Aorta (tissue), 5 donors: ENCODE measurements at regions of chr5 and their contacts with region 1.

Region 1: GRCh38 chr5:156326718-156327259 is at the start of gene SGCD:
- DNase-seq: peak; percentile 84 to 94
- ATAC-seq: peak; percentile 92
- H3K4me3 ChIP-seq: peak within 1 kb of the TSS; percentile 92 to 98
- H3K27ac ChIP-seq: peak within 1 kb of the TSS; percentile 84 to 94
- H3K4me1 ChIP-seq: peaks cover 2 to 14% of the 10 kb centered on the region in 2 donors
- H3K27me3 ChIP-seq: no peaks in the 10 kb centered on the region
- total RNA-seq, gene SGCD: 31.2 to 129 TPM

Region 2: GRCh38 chr5:156036640-156037039 is 290.1 kb before region 1 on chr5:
- intact Hi-C with region 1: loop called in 1 of 2 experiments (anchors 5 kb)
- DNase-seq: no peak
- ATAC-seq: peak; percentile 84
- H3K4me3 ChIP-seq: no peak overlapping the region
- H3K27ac ChIP-seq: peak overlapping the region in 1 of 2 donors; percentile 96
- H3K4me1 ChIP-seq: peaks cover 0 to 5% of the 10 kb centered on the region in 2 donors
- H3K27me3 ChIP-seq: no peaks in the 10 kb centered on the region

Region 3: GRCh38 chr5:156201788-156202403 is 124.9 kb before region 1 on chr5:
- intact Hi-C with region 1: loop called in 1 of 2 experiments (anchors 10 kb)
- DNase-seq: peak in 1 of 2 donors; percentile 48
- ATAC-seq: no peak
- H3K4me3 ChIP-seq: no peak overlapping the region
- H3K27ac ChIP-seq: no peak overlapping the region
- H3K4me1 ChIP-seq: no peaks in the 10 kb centered on the region
- H3K27me3 ChIP-seq: no peaks in the 10 kb centered on the region

Region 4: GRCh38 chr5:156219483-156220005 is 107.2 kb before region 1 on chr5:
- intact Hi-C with region 1: no loop called
- DNase-seq: no peak
- ATAC-seq: no peak
- H3K4me3 ChIP-seq: no peak overlapping the region
- H3K27ac ChIP-seq: no peak overlapping the region
- H3K4me1 ChIP-seq: no peaks in the 10 kb centered on the region
- H3K27me3 ChIP-seq: no peaks in the 10 kb centered on the region

Region 5: DNA sequence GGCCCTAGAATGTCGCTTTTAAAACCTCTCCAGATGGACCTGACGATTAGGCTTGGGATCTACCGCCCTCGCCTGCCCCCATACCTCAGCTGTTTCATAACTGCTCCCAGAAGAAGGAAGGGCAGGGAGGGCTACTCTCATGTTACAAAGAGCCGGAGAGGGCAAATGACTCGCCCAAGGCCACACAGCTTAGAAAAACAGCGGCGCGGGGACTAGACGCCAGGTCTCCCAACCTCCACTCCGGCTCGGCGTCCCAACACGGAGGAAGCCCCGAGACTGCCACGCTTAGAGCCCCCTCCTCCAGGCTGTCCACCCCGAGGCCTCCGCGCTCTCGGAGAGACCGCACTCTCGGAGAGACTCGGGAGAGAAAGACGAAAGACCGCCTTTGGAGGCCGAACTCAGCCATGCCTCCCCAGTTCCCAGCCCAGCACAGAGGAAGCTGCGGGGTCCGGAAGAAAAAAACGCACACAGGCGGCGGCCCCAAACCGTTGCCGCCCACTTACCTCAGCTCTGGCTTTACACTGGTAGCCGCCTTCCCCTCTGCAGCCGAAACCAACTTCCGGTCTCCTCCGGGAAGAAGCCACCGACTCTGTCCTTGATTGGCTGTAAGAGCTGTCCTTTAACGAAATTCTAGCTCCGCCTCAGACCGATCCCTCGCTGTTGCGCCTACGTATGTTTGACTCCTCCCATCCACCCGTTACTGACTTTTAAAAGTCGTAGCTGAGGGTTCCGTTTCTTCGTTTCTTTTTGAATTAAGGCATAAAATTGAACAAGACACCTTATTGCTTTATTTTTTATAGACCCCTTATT is 815.7 kb after region 1 on chr5 and contains the start of gene MED7:
- intact Hi-C with region 1: loop called in 1 of 2 experiments (anchors 10 kb)
- DNase-seq: peak; percentile 91 to 96
- ATAC-seq: peak; percentile 98
- H3K4me3 ChIP-seq: peak within 1 kb of the TSS; percentile 82 to 95
- H3K27ac ChIP-seq: peak within 1 kb of the TSS; percentile 78 to 98
- H3K4me1 ChIP-seq: no peaks in the 10 kb centered on the region
- H3K27me3 ChIP-seq: no peaks in the 10 kb centered on the region
- total RNA-seq, gene MED7: 10.5 to 11.6 TPM